Heart right ventricle (tissue), 16 donors: ENCODE measurements at regions of chr2 and their contacts with region 1.

Region 1: GRCh38 chr2:128754246-128754724 is 435.6 kb upstream of the HS6ST1 start:
- DNase-seq: peak; percentile 48 to 59
- ATAC-seq: peak; percentile 83 to 91 (median 85)
- H3K4me3 ChIP-seq: no peak overlapping the region
- H3K27ac ChIP-seq: peak overlapping the region in 2 of 10 donors; percentile 61 to 68
- H3K4me1 ChIP-seq: peaks cover 7 to 47% (median 32%) of the 10 kb centered on the region in 9 donors
- H3K27me3 ChIP-seq: no peaks in the 10 kb centered on the region
- CTCF ChIP-seq: no peak

Region 2: DNA sequence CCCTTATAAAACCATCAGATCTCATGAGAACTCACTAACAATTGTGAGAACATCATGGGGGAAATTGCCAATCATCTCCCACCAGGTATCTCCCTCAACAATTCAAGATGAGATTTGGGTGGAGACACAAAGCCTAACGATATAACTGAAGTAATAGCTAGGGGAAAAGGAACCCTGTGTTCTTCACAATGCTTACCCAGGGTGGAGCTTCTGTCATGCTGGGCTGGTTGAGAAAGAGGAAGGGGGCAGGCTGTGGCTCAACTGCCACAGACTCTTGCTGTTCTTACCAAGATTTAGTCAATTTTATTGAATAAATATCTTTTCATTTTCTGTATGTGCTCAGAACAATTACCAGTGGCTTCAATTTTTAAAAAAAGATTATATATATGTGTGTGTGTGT is 43.5 kb before region 1 on chr2:
- intact Hi-C with region 1: loop called in 1 of 10 experiments (anchors 2 kb)
- DNase-seq: no peak
- ATAC-seq: peak in 2 of 8 donors; percentile 42
- H3K4me3 ChIP-seq: no peak overlapping the region
- H3K27ac ChIP-seq: no peak overlapping the region
- H3K4me1 ChIP-seq: peaks cover 0 to 11% (median 0%) of the 10 kb centered on the region in 9 donors
- H3K27me3 ChIP-seq: peaks cover 0 to 16% (median 0%) of the 10 kb centered on the region in 7 donors
- CTCF ChIP-seq: no peak

Region 3: GRCh38 chr2:128808462-128809258 is 54.4 kb after region 1 on chr2:
- intact Hi-C with region 1: no loop called
- DNase-seq: no peak
- ATAC-seq: peak in 3 of 8 donors; percentile 62 to 92 (median 80)
- H3K4me3 ChIP-seq: no peak overlapping the region
- H3K27ac ChIP-seq: no peak overlapping the region
- H3K4me1 ChIP-seq: peaks cover 0 to 4% (median 0%) of the 10 kb centered on the region in 9 donors
- H3K27me3 ChIP-seq: peaks cover 0 to 4% (median 0%) of the 10 kb centered on the region in 7 donors
- CTCF ChIP-seq: no peak

Region 4: GRCh38 chr2:128832946-128833663 is 78.8 kb after region 1 on chr2:
- intact Hi-C with region 1: no loop called
- DNase-seq: no peak
- ATAC-seq: no peak
- H3K4me3 ChIP-seq: no peak overlapping the region
- H3K27ac ChIP-seq: no peak overlapping the region
- H3K4me1 ChIP-seq: no peaks in the 10 kb centered on the region
- H3K27me3 ChIP-seq: no peaks in the 10 kb centered on the region
- CTCF ChIP-seq: no peak

Region 5: GRCh38 chr2:129165006-129165405 is 410.7 kb after region 1 on chr2:
- intact Hi-C with region 1: no loop called
- DNase-seq: no peak
- ATAC-seq: peak in 1 of 8 donors; percentile 31
- H3K4me3 ChIP-seq: no peak overlapping the region
- H3K27ac ChIP-seq: no peak overlapping the region
- H3K4me1 ChIP-seq: no peaks in the 10 kb centered on the region
- H3K27me3 ChIP-seq: no peaks in the 10 kb centered on the region
- CTCF ChIP-seq: no peak